ENCODE measurements at regions of chr4 and their contacts with region 1.

Region 1: DNA sequence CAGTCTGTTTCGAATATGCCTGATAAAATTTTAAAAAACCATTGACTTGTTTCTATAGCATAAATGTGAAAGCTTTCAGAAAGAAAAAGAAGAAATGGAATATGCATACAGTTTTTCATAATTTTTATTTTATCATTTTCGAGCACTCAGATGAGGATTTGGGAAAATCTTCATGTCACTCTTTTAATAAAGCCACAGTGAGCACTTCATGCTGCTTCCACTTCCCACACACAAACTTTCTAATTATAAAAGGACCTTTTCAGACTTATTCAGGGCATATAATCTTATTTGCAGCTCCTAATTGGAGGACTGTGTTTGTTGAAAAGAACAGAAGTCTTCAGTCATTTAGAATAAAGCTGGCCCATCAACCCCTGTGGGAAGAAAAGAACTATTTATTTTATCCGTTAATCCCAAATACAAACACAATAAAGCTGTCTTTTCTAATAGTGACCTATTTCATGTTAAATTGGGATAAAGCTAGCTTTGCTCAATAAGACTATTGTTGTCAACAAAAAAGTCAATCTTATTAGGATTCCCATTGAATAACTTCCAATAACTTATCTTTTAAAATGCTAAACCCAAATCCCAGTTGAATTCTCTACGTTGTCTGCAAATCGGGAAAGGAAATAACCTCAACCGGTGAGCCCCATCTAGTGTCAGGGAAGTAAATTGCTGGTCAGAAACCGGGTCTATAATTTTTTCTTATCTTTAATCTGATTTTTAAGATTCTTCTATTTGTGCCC is 211.5 kb downstream of the PDGFRA start:
- DNase-seq: peak; percentile 49
- H3K4me3 Mint-ChIP-seq: no peak overlapping the region
- H3K27ac Mint-ChIP-seq: no peak overlapping the region
- H3K4me1 Mint-ChIP-seq: no peaks in the 10 kb centered on the region
- H3K27me3 Mint-ChIP-seq: peaks cover 2% of the 10 kb centered on the region
- CTCF ChIP-seq: peak; percentile 49

Region 2: GRCh38 chr4:54384563-54384962 is 56.0 kb before region 1 on chr4:
- CTCF ChIA-PET with region 1: interaction called, 6 read pairs
- POLR2A ChIA-PET with region 1: no interaction called
- intact Hi-C with region 1: loop called (anchors 2 kb)
- DNase-seq: peak; percentile 47
- H3K4me3 Mint-ChIP-seq: no peak overlapping the region
- H3K27ac Mint-ChIP-seq: no peak overlapping the region
- H3K4me1 Mint-ChIP-seq: peaks cover 4% of the 10 kb centered on the region
- H3K27me3 Mint-ChIP-seq: no peaks in the 10 kb centered on the region
- CTCF ChIP-seq: peak; percentile 44

Region 3: GRCh38 chr4:54566608-54567007 is 126.0 kb after region 1 on chr4:
- CTCF ChIA-PET with region 1: no interaction called
- POLR2A ChIA-PET with region 1: no interaction called
- intact Hi-C with region 1: no loop called
- DNase-seq: no peak
- H3K4me3 Mint-ChIP-seq: no peak overlapping the region
- H3K27ac Mint-ChIP-seq: no peak overlapping the region
- H3K4me1 Mint-ChIP-seq: peaks cover 9% of the 10 kb centered on the region
- H3K27me3 Mint-ChIP-seq: no peaks in the 10 kb centered on the region
- CTCF ChIP-seq: no peak